ENCODE measurements at regions of chr1 and their contacts with region 1.

Region 1: DNA sequence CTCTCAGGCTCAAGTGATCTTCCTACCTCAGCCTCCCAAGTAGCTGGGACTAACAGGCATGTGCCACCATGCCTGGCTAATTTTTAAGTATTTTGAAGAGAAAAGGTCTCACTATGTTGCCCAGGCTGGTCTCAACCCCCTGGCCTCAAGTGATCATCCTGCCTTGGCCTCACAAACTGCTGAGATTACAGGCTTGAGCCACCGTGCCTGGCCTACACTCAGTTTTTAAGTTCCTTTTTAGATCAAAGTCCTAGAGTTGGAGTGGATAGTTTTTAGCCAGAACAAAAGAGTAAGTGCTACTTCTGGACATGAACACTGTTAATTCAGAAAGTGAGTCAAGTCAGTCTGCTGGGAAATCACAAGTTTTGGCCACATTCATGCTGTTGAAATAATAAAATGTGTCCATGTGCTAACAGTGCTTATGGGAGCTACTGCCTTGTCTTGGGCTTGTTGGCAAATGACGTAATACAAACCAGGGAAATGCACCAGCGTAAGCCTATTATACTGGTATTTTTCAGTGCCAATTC is 84.2 kb downstream of the NDUFS5 start:
- DNase-seq: no peak
- ATAC-seq: peak in 3 of 4 donors; percentile 29 to 61 (median 56)
- H3K4me3 ChIP-seq: no peak overlapping the region
- H3K27ac ChIP-seq: peak overlapping the region in 4 of 12 donors; percentile 3 to 90 (median 44)
- H3K4me1 ChIP-seq: peaks cover 0 to 73% (median 43%) of the 10 kb centered on the region in 12 donors
- H3K27me3 ChIP-seq: no peaks in the 10 kb centered on the region
- CTCF ChIP-seq: no peak
- POLR2A ChIP-seq: no peak

Region 2: DNA sequence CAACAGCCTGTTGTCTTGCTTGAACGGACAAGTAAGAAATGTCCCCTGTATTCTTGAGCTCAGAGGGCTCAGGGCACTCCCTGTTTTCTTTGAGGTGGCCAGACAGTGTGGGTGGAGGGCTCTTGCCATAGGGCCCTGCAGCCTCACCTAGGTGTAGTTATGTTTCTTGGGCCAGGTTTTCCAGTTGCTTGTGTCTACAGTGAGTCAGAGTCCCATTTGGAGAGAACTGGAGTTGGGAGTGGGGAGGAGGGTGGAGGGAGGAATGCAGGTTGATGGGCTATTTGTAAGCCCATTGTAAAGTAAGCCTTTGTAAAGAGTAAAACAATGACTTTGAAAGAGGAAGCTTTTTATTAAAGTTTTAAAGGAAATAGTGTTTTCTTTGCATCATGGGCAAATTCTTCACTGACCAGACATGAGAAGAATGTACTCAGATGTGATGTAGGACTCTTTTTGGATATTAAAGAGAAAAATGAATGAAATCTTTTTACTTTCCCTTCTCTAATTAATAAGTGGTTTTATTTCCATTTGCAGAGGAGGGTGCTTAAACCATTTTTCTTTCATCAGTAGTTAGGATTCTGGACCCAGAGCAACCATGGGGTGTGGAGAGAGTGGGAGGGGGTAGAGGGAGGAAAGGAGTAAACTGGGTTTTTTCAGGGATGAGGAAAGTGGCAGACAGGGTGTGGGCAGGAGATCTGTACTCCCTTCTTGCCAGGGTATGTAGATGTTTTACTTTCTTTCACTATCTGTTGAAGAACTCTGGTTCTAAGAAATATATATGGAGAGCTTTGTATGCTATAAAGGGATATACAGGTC is 49.0 kb after region 1 on chr1:
- intact Hi-C with region 1: loop called in 1 of 10 experiments (anchors 10 kb)
- DNase-seq: no peak
- ATAC-seq: peak in 2 of 4 donors; percentile 26 to 31
- H3K4me3 ChIP-seq: no peak overlapping the region
- H3K27ac ChIP-seq: peak overlapping the region in 3 of 12 donors; percentile 3 to 56 (median 22)
- H3K4me1 ChIP-seq: peaks cover 6 to 60% (median 42%) of the 10 kb centered on the region in 12 donors
- H3K27me3 ChIP-seq: no peaks in the 10 kb centered on the region
- CTCF ChIP-seq: no peak
- POLR2A ChIP-seq: no peak

Region 3: DNA sequence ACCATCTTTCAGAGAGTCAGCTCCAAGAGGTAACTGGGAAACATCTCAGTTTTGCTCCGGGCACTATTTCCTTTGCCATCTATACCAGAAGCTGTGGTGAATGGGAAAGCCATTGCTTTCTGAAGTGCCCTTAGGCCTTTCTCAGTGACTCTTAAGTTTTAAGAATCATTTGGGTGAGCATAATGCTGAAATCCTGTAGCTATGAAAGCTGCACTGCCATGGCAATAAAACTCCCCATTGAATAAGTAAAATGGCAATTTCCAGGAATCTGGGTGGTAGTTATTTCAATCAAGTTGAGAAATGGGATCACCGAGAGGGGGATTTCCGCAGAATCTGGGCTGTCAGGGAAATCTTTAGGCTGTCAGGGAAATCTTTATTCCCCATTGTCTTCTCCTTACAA is 67.3 kb after region 1 on chr1:
- intact Hi-C with region 1: no loop called
- DNase-seq: no peak
- ATAC-seq: no peak
- H3K4me3 ChIP-seq: no peak overlapping the region
- H3K27ac ChIP-seq: peak overlapping the region in 1 of 12 donors; percentile 59
- H3K4me1 ChIP-seq: peaks cover 9 to 59% (median 44%) of the 10 kb centered on the region in 12 donors
- H3K27me3 ChIP-seq: no peaks in the 10 kb centered on the region
- CTCF ChIP-seq: no peak
- POLR2A ChIP-seq: no peak

Region 4: GRCh38 chr1:39272027-39272797 is 161.8 kb after region 1 on chr1:
- intact Hi-C with region 1: no loop called
- DNase-seq: peak in 2 of 5 donors; percentile 14 to 33
- ATAC-seq: peak in 3 of 4 donors; percentile 16 to 21 (median 18)
- H3K4me3 ChIP-seq: no peak overlapping the region
- H3K27ac ChIP-seq: peak overlapping the region in 9 of 12 donors; percentile 1 to 84 (median 18)
- H3K4me1 ChIP-seq: peaks cover 7 to 79% (median 60%) of the 10 kb centered on the region in 12 donors
- H3K27me3 ChIP-seq: no peaks in the 10 kb centered on the region
- CTCF ChIP-seq: no peak
- POLR2A ChIP-seq: no peak

Region 5: GRCh38 chr1:39453603-39454002 is 343.2 kb after region 1 on chr1:
- intact Hi-C with region 1: no loop called
- DNase-seq: peak in 3 of 5 donors; percentile 53 to 60 (median 55)
- ATAC-seq: peak in 2 of 4 donors; percentile 38 to 57
- H3K4me3 ChIP-seq: no peak overlapping the region
- H3K27ac ChIP-seq: no peak overlapping the region
- H3K4me1 ChIP-seq: peaks cover 0 to 9% (median 0%) of the 10 kb centered on the region in 12 donors
- H3K27me3 ChIP-seq: no peaks in the 10 kb centered on the region
- CTCF ChIP-seq: no peak
- POLR2A ChIP-seq: no peak

Measured in heart left ventricle (tissue), 16 donors.